MCF 10A (cell line): ENCODE measurements at regions of chr6 and their contacts with region 1.

Region 1: GRCh38 chr6:28981833-28982475 is 23.2 kb downstream of the ZNF311 start:
- DNase-seq: peak; percentile 93
- H3K4me3 Mint-ChIP-seq: peak overlapping the region; percentile 75
- H3K27ac Mint-ChIP-seq: peak overlapping the region; percentile 91
- H3K4me1 Mint-ChIP-seq: peaks cover 37% of the 10 kb centered on the region
- H3K27me3 Mint-ChIP-seq: no peaks in the 10 kb centered on the region
- CTCF ChIP-seq: no peak

Region 2: DNA sequence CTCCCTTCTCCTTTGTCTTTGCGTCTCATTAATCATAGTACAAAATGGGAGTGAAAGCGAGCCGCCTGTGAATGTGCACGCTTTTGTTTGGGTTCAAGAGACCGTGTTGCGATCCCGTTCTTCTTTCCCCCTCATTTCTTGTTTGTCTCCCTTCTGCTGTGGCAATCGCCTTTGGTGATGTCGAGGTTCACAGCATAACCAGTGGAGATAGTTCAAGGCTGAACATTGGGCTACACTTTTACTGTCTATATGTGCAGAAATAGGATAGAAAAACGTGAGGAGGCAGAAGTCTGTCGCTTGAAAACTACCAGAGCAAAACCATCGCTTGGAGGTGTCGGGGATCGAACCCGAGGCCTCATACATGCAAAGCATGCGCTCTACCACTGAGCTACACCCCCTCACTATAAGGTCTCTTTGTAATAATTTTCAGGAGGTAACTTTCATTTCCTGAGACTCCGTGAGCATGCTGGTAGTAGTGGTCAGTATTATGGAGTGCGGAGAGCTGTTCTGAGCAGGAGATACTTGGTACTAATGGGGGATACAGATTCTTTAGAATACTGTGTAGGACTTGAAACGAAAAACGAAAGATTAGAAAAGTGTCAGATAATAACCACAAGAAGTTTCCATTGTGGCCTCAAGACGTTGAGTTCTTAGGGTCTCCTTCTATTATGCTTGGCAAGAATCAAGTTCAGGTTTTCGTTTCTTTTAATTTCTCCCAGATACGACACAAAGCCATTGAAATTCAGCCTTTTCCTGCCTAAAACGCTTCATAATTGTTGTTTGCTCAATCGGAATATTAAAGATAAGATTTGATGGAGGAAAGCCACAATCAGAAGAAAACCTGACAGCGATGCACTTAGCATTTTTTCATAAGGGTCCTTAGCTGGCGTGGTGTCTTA is 164.8 kb before region 1 on chr6:
- CTCF ChIA-PET with region 1: interaction called, 4 read pairs
- POLR2A ChIA-PET with region 1: interaction called, 3 read pairs
- intact Hi-C with region 1: loop called (anchors 1 kb)
- DNase-seq: peak; percentile 76
- H3K4me3 Mint-ChIP-seq: peak overlapping the region; percentile 72
- H3K27ac Mint-ChIP-seq: peak overlapping the region; percentile 31
- H3K4me1 Mint-ChIP-seq: peaks cover 24% of the 10 kb centered on the region
- H3K27me3 Mint-ChIP-seq: peaks cover 14% of the 10 kb centered on the region
- CTCF ChIP-seq: no peak

Region 3: GRCh38 chr6:28880894-28881780 is 100.8 kb before region 1 on chr6:
- CTCF ChIA-PET with region 1: no interaction called
- POLR2A ChIA-PET with region 1: no interaction called
- intact Hi-C with region 1: loop called (anchors 5 kb)
- DNase-seq: peak; percentile 78
- H3K4me3 Mint-ChIP-seq: peak overlapping the region; percentile 86
- H3K27ac Mint-ChIP-seq: peak overlapping the region; percentile 8
- H3K4me1 Mint-ChIP-seq: peaks cover 6% of the 10 kb centered on the region
- H3K27me3 Mint-ChIP-seq: peaks cover 21% of the 10 kb centered on the region
- CTCF ChIP-seq: no peak

Region 4: GRCh38 chr6:28923318-28924102 is 58.4 kb before region 1 on chr6 and contains the start of gene TRIM27:
- CTCF ChIA-PET with region 1: interaction called, 3 read pairs
- POLR2A ChIA-PET with region 1: interaction called, 121 read pairs
- intact Hi-C with region 1: loop called (anchors 1 kb)
- DNase-seq: peak; percentile 92
- H3K4me3 Mint-ChIP-seq: peak within 1 kb of the TSS; percentile 93
- H3K27ac Mint-ChIP-seq: peak within 1 kb of the TSS; percentile 88
- H3K4me1 Mint-ChIP-seq: peaks cover 19% of the 10 kb centered on the region
- H3K27me3 Mint-ChIP-seq: no peaks in the 10 kb centered on the region
- CTCF ChIP-seq: no peak
- total RNA-seq, gene TRIM27: 68.8 and 68.9 TPM in 2 replicates

Region 5: DNA sequence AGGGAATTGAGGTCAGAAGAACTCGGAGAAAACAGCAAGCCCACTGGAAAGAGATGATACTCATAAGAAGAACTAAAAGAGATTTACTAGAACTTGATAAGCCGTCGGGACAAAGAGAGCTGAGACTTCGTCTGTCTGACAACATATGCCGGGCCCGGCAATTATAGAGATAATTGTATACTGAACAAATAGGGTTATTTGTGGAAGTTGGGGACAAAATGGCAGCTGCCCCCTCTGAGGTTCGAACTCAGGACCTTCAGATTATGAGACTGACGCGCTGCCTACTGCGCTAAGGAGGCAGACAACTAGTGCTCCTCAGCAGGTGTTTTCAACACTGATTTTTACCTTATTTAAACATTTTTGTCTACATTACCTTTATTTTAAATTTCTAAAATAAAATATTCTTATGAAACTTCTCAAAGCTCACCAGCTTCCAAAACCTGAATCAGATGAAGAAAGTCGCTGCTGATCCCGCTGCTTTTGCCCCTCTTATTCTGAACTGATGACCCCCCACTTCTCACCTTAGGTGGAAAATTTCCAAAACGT is 28.8 kb before region 1 on chr6:
- CTCF ChIA-PET with region 1: interaction called, 6 read pairs
- POLR2A ChIA-PET with region 1: interaction called, 6 read pairs
- intact Hi-C with region 1: loop called (anchors 1 kb)
- DNase-seq: peak; percentile 63
- H3K4me3 Mint-ChIP-seq: peak overlapping the region; percentile 77
- H3K27ac Mint-ChIP-seq: peak overlapping the region; percentile 51
- H3K4me1 Mint-ChIP-seq: peaks cover 8% of the 10 kb centered on the region
- H3K27me3 Mint-ChIP-seq: no peaks in the 10 kb centered on the region
- CTCF ChIP-seq: no peak

Region 6: DNA sequence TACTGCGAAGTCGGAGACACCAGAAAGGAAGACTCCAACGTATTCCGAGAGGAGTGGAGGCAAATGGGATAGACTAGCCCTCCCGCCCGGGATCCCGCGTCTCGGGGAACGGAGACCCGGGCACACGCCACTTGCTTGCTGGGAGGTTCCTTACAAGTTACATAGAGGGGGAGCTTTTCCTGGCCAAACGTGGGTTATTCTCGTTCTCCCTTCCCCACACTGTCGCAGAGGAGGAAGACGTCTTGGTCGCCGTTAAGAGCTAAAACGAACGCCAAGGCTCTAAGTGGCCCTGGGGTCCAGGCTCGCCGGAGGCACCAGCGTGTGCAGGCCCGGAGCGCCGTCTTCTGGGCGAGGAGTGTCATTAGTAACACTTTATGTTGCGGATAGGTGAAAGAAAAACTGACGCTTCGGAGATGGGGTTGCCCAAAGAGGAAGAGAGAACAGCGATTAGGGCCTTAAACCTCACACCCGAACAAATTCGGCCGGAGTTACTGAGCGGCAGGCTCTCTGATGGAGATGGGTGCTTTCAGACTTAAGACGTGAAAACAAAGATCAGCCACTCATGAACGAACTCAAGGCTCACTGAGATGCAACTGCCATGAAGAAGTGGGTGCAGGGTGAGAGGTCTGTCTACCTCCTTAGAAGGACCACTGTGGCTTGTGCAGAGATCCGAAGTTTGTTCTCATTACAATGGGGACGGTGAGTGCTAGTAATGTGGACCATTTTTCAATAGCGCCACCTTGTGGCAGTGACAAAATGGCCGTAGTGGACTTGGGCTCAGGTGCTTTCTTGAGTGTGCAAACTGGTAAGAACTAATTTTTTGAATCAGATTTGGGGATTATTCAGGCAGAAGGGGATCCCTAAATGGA is 34.8 kb after region 1 on chr6:
- CTCF ChIA-PET with region 1: interaction called, 15 read pairs
- POLR2A ChIA-PET with region 1: interaction called, 7 read pairs
- intact Hi-C with region 1: loop called (anchors 2 kb)
- DNase-seq: peak; percentile 89
- H3K4me3 Mint-ChIP-seq: peak overlapping the region; percentile 69
- H3K27ac Mint-ChIP-seq: no peak overlapping the region
- H3K4me1 Mint-ChIP-seq: peaks cover 12% of the 10 kb centered on the region
- H3K27me3 Mint-ChIP-seq: peaks cover 4% of the 10 kb centered on the region
- CTCF ChIP-seq: peak; percentile 79